ENCODE measurements at regions of chr19 and their contacts with region 1.

Region 1: DNA sequence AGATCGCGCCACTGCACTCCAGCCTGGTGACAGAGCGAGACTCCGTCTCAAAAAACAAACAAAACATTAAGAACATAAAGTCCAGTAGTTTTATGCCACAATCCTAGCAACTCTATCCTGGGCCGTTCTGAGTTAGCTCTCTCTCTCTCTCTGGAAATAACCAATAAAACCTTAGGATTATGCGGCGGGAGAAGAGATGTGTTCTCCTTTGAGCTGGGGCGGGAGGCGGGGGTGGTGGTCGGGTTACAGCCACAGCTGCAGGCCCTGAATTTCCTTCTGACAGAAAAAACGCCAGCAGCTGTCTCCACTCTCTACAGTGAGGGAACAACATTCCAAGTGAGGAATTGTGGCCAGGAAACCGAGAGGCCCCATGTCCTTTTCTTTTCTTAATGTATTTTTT is 9.1 kb upstream of the PNMA8A start:
- DNase-seq: no peak
- H3K4me3 ChIP-seq: peak overlapping the region in 1 of 3 donors; percentile 5
- H3K27ac ChIP-seq: peak overlapping the region; percentile 82 to 89
- H3K4me1 ChIP-seq: peaks cover 0 to 10% of the 10 kb centered on the region in 2 donors
- H3K27me3 ChIP-seq: no peaks in the 10 kb centered on the region
- CTCF ChIP-seq: no peak
- POLR2A ChIP-seq: no peak

Region 2: DNA sequence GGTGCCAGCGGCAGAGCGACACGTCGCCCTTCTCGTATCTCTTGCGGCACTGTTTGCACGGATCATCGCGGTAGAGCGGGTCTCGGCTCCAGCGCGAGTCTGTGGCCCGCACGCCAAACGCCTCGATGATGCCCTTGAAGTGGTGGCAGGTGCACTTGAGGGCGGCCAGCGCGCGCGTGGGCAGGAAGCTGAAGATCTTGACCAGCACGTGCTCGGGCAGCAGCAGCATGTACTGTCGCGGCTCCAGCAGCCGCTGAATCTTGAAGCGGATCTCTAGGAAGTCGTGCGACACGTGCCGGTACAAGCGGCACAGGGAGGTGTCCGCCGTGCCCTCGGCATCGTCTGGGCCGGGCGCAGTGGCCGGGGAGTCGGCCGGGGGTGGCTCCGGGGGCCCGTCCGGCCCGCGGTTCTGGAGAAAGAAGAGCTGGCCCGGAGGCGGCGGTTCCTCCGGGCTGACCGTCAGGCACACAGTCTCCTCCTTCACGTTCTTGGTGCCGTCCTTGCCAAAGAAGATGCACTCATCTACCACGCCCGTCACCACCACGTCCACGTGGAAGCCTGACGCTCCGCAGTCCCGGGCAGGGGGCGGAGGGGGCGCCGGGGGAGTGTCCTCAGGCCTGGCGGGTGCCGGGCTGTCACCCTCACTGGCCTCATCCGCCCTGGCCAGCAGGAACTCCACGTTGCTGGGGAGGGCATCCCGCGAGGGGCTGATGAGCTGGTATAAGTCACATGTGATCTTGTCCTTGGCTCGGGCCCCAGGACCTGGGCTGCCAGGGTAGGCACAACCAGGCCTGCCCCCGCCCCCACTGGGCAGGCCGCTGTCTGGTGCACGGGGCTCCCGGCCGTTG is 768.3 kb before region 1 on chr19:
- intact Hi-C with region 1: loop called (anchors 5 kb)
- DNase-seq: no peak
- H3K4me3 ChIP-seq: no peak overlapping the region
- H3K27ac ChIP-seq: peak overlapping the region in 1 of 2 donors; percentile 19
- H3K4me1 ChIP-seq: no peaks in the 10 kb centered on the region
- H3K27me3 ChIP-seq: no peaks in the 10 kb centered on the region
- CTCF ChIP-seq: no peak
- POLR2A ChIP-seq: no peak

Region 3: DNA sequence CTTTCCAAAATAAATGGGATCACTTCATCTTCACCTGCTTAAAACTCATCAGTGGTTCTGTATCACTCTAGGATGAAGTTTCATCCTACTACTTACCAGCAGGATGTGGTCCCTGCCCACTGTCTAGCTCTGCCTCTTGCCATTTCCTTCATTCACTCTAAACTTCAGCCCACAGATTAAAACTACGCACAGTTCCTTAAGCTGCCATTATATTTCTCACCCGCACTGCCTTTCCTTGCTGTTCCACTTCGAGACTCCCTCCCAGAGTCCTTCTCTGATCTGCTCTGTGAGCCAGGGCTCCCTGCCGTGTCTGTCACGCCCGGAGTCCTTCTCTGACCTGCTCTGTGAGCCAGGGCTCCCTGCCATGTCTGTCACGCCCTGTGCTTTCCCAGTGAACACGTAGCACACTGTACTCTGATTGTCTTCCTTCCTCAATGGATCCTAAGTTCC is 487.2 kb after region 1 on chr19:
- intact Hi-C with region 1: loop called (anchors 5 kb)
- DNase-seq: peak in 1 of 2 donors; percentile 49
- H3K4me3 ChIP-seq: no peak overlapping the region
- H3K27ac ChIP-seq: peak overlapping the region in 1 of 2 donors; percentile 66
- H3K4me1 ChIP-seq: no peaks in the 10 kb centered on the region
- H3K27me3 ChIP-seq: no peaks in the 10 kb centered on the region
- CTCF ChIP-seq: no peak
- POLR2A ChIP-seq: no peak

Measured in breast epithelium (tissue), 4 donors.